A549 (cell line): ENCODE measurements at regions of chr9 and their contacts with region 1.

Region 1: GRCh38 chr9:120348951-120349429 is 231.0 kb downstream of the CDK5RAP2 start:
- DNase-seq: peak; percentile 62 to 73
- ATAC-seq: peak; percentile 77 to 93
- H3K4me3 ChIP-seq: no peak overlapping the region
- H3K27ac ChIP-seq: peak overlapping the region in 1 of 2 experiments; percentile 60; a peak in 3 of 6 replicates
- H3K4me1 ChIP-seq: peaks cover 7% of the 10 kb centered on the region
- CTCF ChIP-seq: peak; percentile 75
- EP300 ChIP-seq: no peak
- POLR2A ChIP-seq: no peak
- RAD21 ChIP-seq: peak; percentile 88 to 92

Region 2: GRCh38 chr9:119556129-119556875 is 792.7 kb before region 1 on chr9:
- CTCF ChIA-PET with region 1: interaction called, 26 read pairs
- POLR2A ChIA-PET with region 1: no interaction called
- DNase-seq: peak; percentile 31 to 44
- ATAC-seq: peak; percentile 86 to 99
- H3K4me3 ChIP-seq: peak overlapping the region; percentile 29; the same call in 1 of the 3 replicates
- H3K27ac ChIP-seq: peak overlapping the region in 1 of 2 experiments; percentile 40; a peak in 1 of 6 replicates
- H3K4me1 ChIP-seq: no peaks in the 10 kb centered on the region
- CTCF ChIP-seq: peak; percentile 69
- EP300 ChIP-seq: no peak
- POLR2A ChIP-seq: no peak
- RAD21 ChIP-seq: peak; percentile 70

Region 3: GRCh38 chr9:120331913-120332312 is 17.1 kb before region 1 on chr9:
- CTCF ChIA-PET with region 1: interaction called, 23 read pairs
- POLR2A ChIA-PET with region 1: no interaction called
- DNase-seq: no peak
- ATAC-seq: no peak
- H3K4me3 ChIP-seq: no peak overlapping the region
- H3K27ac ChIP-seq: no peak overlapping the region
- H3K4me1 ChIP-seq: no peaks in the 10 kb centered on the region
- CTCF ChIP-seq: no peak
- EP300 ChIP-seq: no peak
- POLR2A ChIP-seq: no peak
- RAD21 ChIP-seq: no peak

Region 4: GRCh38 chr9:120338340-120338739 is 10.7 kb before region 1 on chr9:
- CTCF ChIA-PET with region 1: interaction called, 23 read pairs
- POLR2A ChIA-PET with region 1: no interaction called
- DNase-seq: no peak
- ATAC-seq: 0 out of 6 replicates have a peak, but pooled peaks of 1 of the 2 experiments have one; percentile 37
- H3K4me3 ChIP-seq: no peak overlapping the region
- H3K27ac ChIP-seq: no peak overlapping the region
- H3K4me1 ChIP-seq: no peaks in the 10 kb centered on the region
- CTCF ChIP-seq: no peak
- EP300 ChIP-seq: no peak
- POLR2A ChIP-seq: no peak
- RAD21 ChIP-seq: no peak

Region 5: GRCh38 chr9:120431268-120431667 is 82.3 kb after region 1 on chr9:
- CTCF ChIA-PET with region 1: no interaction called
- POLR2A ChIA-PET with region 1: no interaction called
- DNase-seq: no peak
- ATAC-seq: no peak
- H3K4me3 ChIP-seq: no peak overlapping the region
- H3K27ac ChIP-seq: no peak overlapping the region
- H3K4me1 ChIP-seq: no peaks in the 10 kb centered on the region
- CTCF ChIP-seq: no peak
- EP300 ChIP-seq: no peak
- POLR2A ChIP-seq: no peak
- RAD21 ChIP-seq: no peak

Region 6: GRCh38 chr9:120783602-120784047 is 434.6 kb after region 1 on chr9:
- CTCF ChIA-PET with region 1: no interaction called
- POLR2A ChIA-PET with region 1: no interaction called
- DNase-seq: peak in 1 of 2 experiments; percentile 60
- ATAC-seq: peak in 1 of 2 experiments; percentile 72; a peak in 3 of 6 replicates
- H3K4me3 ChIP-seq: no peak overlapping the region
- H3K27ac ChIP-seq: peak overlapping the region in 1 of 2 experiments; percentile 29; a peak in 2 of 6 replicates
- H3K4me1 ChIP-seq: peaks cover 27% of the 10 kb centered on the region
- CTCF ChIP-seq: no peak
- EP300 ChIP-seq: peak; percentile 11 to 49; a peak in 2 of 5 replicates
- POLR2A ChIP-seq: no peak
- RAD21 ChIP-seq: no peak